IMR-90 (cell line): ENCODE measurements at regions of chr9 and their contacts with region 1.

Region 1: DNA sequence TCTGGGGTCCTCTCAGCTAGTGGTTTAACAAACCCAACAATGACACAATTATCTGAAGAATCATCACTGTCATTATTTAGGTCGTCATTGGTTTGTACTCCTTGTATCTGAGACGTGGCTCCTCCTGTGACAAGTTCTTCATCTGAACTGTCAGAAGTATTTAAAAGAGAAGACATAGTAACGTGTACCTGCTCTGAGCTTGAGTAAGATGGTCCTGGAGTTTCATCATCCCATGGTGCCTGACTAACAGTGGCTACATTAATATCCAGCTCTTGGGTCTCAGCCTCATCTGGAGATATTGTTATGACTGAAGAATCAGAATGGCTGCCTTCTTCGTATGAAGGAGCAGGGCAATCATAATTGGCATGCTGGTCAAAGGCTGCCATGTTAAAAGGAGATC is 9.1 kb upstream of the SMIM27 start:
- DNase-seq: no peak
- ATAC-seq: no peak
- H3K4me3 ChIP-seq: no peak overlapping the region
- H3K27ac ChIP-seq: no peak overlapping the region
- H3K4me1 ChIP-seq: no peaks in the 10 kb centered on the region
- H3K27me3 ChIP-seq: no peaks in the 10 kb centered on the region
- CTCF ChIP-seq: no peak
- POLR2A ChIP-seq: no peak
- RAD21 ChIP-seq: no peak

Region 2: DNA sequence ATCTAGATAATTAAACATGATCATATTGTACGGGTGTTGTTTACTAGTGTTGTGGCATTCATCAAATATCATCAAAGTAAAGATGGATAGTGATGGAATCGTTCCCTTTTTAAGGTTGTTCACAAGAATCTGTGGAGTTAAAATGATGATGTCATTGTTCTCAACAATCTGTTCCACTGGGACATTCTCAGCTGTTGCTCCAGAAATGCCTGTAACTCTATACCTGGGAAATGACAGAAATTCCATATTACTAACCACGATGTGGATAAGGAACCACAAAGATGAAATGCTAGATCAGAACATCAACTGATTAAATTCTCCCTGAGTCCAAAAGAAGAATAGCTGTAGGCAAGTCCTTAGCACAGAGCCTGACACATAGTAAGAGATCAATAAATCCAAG is 55.1 kb before region 1 on chr9:
- CTCF ChIA-PET with region 1: no interaction called
- POLR2A ChIA-PET with region 1: no interaction called
- dilution Hi-C with region 1: no loop called
- in situ Hi-C with region 1: no loop called
- intact Hi-C with region 1: loop called (anchors 10 kb)
- DNase-seq: peak; percentile 86
- ATAC-seq: peak; percentile 25
- H3K4me3 ChIP-seq: no peak overlapping the region
- H3K27ac ChIP-seq: no peak overlapping the region
- H3K4me1 ChIP-seq: peaks cover 4% of the 10 kb centered on the region; the same call in 1 of the 2 replicates
- H3K27me3 ChIP-seq: no peaks in the 10 kb centered on the region
- CTCF ChIP-seq: no peak
- POLR2A ChIP-seq: no peak
- RAD21 ChIP-seq: no peak